Natural killer cell (primary cell): ENCODE measurements at regions of chr7 and their contacts with region 1.

Region 1: DNA sequence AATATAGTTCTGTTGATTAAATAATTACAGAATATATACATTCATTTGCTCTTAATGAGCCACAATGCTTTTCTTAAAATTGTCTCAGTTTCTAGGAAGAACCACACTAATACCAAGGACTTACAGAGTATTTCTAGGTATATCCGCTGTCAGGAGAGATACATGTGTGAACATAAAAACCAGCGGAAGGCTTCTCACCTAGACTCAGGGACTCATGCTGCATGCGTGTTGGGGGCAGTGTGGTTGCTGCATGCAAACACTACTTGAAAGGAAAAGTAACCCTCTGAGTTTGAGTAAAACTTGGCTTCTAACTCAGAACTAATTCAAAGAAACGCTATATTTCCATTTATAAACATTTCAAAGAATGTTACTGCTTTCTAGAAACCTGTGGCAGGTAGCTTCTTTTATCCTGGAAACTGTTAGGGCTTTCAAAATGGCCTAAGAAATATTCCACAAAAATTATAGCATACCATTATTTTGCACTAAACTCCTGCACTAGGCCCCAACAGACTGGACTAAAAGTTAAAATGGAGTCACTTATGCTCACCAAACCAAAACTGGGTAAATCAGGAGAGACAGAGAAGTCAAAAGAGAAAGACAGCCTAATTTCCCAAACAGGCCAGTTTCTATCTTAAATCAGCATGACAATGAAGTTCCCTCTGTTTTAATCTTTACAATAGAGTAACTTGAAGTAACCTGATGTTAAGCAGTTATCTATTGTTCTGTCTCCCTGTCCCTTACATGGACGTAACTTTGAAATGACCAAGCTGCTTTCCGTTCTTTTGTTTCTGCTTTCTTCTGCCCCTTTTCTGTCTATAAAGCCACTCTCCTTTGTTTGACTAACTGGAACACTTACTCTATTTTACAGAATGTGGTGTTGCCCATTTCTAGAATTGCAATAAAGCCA is 95.2 kb upstream of the FAM133B start:
- DNase-seq: peak; percentile 51 to 76
- ATAC-seq: peak; percentile 94 to 98 (median 95)
- H3K4me3 ChIP-seq: no peak overlapping the region
- H3K4me3 Mint-ChIP-seq: peak overlapping the region; percentile 79
- H3K27ac ChIP-seq: peak overlapping the region; percentile 88
- H3K27ac Mint-ChIP-seq: peak overlapping the region; percentile 92 to 96
- H3K4me1 ChIP-seq: peaks cover 20% of the 10 kb centered on the region
- H3K4me1 Mint-ChIP-seq: peaks cover 85 to 91% of the 10 kb centered on the region in 2 donors
- H3K27me3 ChIP-seq: no peaks in the 10 kb centered on the region
- H3K27me3 Mint-ChIP-seq: no peaks in the 10 kb centered on the region
- CTCF ChIP-seq: no peak

Region 2: GRCh38 chr7:92633211-92633906 is 52.0 kb before region 1 on chr7:
- intact Hi-C with region 1: loop called (anchors 2 kb)
- DNase-seq: peak in 1 of 2 donors; percentile 57
- ATAC-seq: peak; percentile 79 to 86 (median 80)
- H3K4me3 ChIP-seq: no peak overlapping the region
- H3K4me3 Mint-ChIP-seq: peak overlapping the region; percentile 68
- H3K27ac ChIP-seq: peak overlapping the region; percentile 37
- H3K27ac Mint-ChIP-seq: peak overlapping the region; percentile 90 to 92
- H3K4me1 ChIP-seq: peaks cover 3% of the 10 kb centered on the region
- H3K4me1 Mint-ChIP-seq: peaks cover 42 to 48% of the 10 kb centered on the region in 2 donors
- H3K27me3 ChIP-seq: no peaks in the 10 kb centered on the region
- H3K27me3 Mint-ChIP-seq: no peaks in the 10 kb centered on the region
- CTCF ChIP-seq: no peak

Region 3: DNA sequence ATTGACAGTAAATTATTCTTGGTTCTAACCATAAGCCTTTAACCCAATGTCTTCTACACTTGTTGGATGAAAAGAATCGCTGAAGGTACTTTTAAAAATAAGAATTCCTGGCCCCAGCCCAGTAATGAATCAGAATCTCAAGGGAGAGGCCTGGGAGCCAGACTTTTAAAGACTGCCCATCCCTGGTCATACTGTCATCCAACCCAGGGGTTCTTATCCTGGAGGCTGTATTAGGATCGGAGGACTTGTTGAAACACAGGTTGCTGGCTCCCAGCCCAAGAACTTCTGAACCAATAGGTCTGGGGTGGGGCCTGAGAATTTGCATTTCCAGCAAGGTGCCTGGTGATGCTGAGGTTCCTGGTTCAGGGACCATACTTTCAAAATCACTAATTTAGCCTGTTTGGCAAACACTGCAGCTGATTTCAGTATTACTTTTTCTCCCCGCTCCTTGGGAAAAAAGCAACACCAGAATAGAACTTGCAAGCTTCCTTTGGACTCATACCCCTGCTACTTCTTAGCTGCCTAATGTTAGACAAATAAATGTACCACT is 15.7 kb before region 1 on chr7:
- intact Hi-C with region 1: loop called (anchors 1 kb)
- DNase-seq: no peak
- ATAC-seq: no peak
- H3K4me3 ChIP-seq: no peak overlapping the region
- H3K4me3 Mint-ChIP-seq: no peak overlapping the region
- H3K27ac ChIP-seq: no peak overlapping the region
- H3K27ac Mint-ChIP-seq: peak overlapping the region in 1 of 2 donors; percentile 15
- H3K4me1 ChIP-seq: peaks cover 9% of the 10 kb centered on the region
- H3K4me1 Mint-ChIP-seq: peaks cover 17 to 24% of the 10 kb centered on the region in 2 donors
- H3K27me3 ChIP-seq: no peaks in the 10 kb centered on the region
- H3K27me3 Mint-ChIP-seq: no peaks in the 10 kb centered on the region
- CTCF ChIP-seq: no peak

Region 4: GRCh38 chr7:92904292-92905131 is 219.1 kb after region 1 on chr7:
- intact Hi-C with region 1: loop called (anchors 2 kb)
- DNase-seq: peak; percentile 65 to 80
- ATAC-seq: peak; percentile 98 to 100 (median 99)
- H3K4me3 ChIP-seq: no peak overlapping the region
- H3K4me3 Mint-ChIP-seq: no peak overlapping the region
- H3K27ac ChIP-seq: no peak overlapping the region
- H3K27ac Mint-ChIP-seq: peak overlapping the region; percentile 62 to 64
- H3K4me1 ChIP-seq: peaks cover 9% of the 10 kb centered on the region
- H3K4me1 Mint-ChIP-seq: peaks cover 18 to 19% of the 10 kb centered on the region in 2 donors
- H3K27me3 ChIP-seq: no peaks in the 10 kb centered on the region
- H3K27me3 Mint-ChIP-seq: peaks cover 0 to 3% of the 10 kb centered on the region in 2 donors
- CTCF ChIP-seq: no peak